ENCODE measurements at regions of chr19 and their contacts with region 1.

Region 1: DNA sequence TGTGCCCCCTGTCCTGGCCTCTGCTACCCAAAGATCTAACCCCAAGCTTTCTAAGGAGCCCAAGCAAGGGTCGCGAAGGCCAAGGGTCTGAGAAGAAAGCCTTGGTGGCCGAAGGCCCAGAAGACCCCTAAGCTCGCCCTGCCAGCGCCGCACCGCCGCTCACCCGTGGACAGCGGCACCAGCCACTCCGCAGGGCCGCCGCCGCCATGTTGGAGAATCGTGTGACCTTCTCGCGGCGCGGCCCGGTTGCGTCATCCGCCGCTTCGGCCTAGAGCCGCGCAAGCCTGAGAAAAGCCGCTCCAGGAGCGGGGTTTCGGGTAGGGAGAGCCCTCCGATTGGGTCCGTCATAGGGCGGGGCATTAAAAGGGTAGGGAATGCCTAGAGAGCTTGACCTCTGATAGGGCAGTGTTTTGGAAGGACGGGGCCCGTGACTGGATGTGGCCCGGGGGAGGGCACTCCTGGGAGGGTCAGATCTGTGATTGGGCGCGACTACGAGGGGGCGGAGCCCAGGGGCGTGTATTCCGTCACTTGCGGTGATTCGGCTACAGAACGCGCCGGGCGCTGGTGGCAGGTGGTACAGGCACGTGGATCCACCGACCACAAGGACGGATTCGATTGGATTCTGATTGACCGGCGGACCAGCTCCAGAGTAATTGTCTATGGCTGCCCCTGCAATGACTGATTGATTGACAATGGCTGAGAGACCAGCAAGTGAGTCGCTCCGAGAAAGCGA is at the start of gene TIMM44:
- DNase-seq: peak; percentile 99
- H3K4me3 ChIP-seq: peak within 1 kb of the TSS; percentile 87
- H3K27ac ChIP-seq: peak within 1 kb of the TSS; percentile 91
- H3K4me1 ChIP-seq: peaks cover 17% of the 10 kb centered on the region
- H3K27me3 ChIP-seq: no peaks in the 10 kb centered on the region
- CTCF ChIP-seq: no peak
- total RNA-seq, gene TIMM44: 72.8 and 74.6 TPM in 2 replicates

Region 2: GRCh38 chr19:7629347-7630054 is 314.1 kb before region 1 on chr19 and contains the starts of genes PET100 and XAB2:
- CTCF ChIA-PET with region 1: interaction called, 12 read pairs
- POLR2A ChIA-PET with region 1: no interaction called
- intact Hi-C with region 1: no loop called
- DNase-seq: peak; percentile 95 to 98
- H3K4me3 ChIP-seq: peak within 1 kb of the TSS; percentile 92
- H3K27ac ChIP-seq: peak within 1 kb of the TSS; percentile 45
- H3K4me1 ChIP-seq: peaks cover 18% of the 10 kb centered on the region
- H3K27me3 ChIP-seq: no peaks in the 10 kb centered on the region
- CTCF ChIP-seq: no peak
- total RNA-seq, gene PET100: 149 and 222 TPM in 2 replicates
- total RNA-seq, gene XAB2: 44.9 and 51.3 TPM in 2 replicates

Region 3: DNA sequence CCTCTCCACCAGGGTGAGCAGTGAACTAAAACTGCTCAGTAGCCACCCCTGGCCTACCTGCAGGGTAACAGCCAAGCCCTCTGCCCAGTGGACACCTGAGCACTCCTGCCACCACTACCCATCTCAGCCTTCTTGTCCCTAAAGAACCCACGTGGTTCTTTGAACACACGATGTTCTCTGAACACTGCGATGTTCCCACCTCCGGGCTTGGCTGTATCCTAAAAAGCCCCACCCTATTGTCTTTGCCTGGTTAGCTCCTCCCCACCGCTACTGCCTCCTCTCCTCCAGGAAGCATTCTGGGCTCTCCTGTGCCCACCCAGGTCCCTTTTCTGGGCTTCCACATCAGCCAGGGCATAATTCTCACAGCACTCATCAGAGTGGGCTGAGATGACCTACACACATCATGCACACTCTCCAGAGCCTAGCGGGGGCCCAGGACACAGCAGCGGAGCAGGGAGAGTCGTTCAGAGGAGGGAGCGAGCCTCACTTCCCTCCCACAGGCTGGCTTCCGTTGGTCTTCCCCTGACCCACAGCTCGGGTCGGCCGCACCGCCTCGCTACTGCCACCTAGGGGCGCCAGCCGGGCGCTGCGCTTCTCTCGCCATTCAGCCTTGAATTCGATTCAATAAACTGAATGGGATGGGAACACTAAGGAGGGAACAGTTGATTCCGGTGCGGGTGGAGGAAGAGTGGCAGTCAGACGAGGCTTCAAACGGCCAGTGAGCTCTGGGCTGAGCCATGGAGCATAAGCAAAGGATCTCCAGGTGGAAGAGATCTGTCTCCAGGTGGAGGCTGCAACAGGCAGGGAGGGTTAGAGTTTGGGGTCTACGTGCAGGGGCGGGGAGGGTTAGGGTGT is 58.6 kb after region 1 on chr19:
- CTCF ChIA-PET with region 1: interaction called, 5 read pairs
- POLR2A ChIA-PET with region 1: no interaction called
- intact Hi-C with region 1: loop called (anchors 1 kb)
- DNase-seq: peak; percentile 76 to 84
- H3K4me3 ChIP-seq: peak overlapping the region; percentile 11; the same call in 1 of the 2 replicates
- H3K27ac ChIP-seq: 0 out of 2 replicates have a peak overlapping the region, but pooled peaks have one; percentile 2
- H3K4me1 ChIP-seq: peaks cover 30% of the 10 kb centered on the region
- H3K27me3 ChIP-seq: no peaks in the 10 kb centered on the region
- CTCF ChIP-seq: peak; percentile 99

Region 4: DNA sequence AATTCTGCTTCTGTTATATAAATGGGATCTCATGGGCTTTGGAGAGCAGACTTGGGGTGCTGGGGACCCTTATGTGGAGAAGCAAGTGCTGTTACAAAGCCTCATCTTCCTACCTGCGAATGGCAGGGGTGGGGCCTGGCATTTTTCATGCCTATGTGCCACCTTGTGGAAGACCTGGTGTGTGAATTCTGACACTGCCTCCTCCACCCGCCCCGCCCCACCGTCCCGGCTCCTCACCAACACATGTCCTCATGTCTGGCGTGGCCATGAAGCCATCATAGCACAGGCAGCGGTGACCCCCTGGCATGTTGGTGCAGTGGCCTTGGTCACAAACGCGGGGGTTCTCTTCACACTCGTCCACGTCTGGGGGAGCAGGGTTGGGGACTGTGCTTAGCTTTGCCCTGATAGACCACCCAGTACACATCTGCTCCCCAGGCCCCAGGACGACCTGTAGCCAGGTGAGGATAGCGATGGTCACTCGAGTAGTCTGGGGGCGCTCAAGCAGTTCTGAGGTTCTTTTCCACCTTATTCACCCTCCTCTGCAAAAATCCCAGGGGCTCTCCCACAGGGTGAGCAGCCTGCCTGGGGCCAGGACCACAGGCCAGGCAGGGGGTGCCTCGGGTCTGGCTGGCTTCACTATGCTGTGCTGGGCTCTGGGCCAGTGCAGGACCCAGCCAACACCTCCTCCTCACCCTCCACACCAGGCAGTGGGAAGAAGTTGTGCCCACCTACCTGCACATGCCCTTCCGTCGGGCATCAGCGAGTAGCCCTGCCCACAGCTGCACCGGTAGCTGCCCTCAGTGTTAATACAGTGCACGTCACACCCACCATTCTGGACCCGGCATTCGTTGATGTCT is 173.1 kb after region 1 on chr19:
- CTCF ChIA-PET with region 1: no interaction called
- POLR2A ChIA-PET with region 1: no interaction called
- intact Hi-C with region 1: loop called (anchors 5 kb)
- DNase-seq: peak in 1 of 2 experiments; percentile 30
- H3K4me3 ChIP-seq: no peak overlapping the region
- H3K27ac ChIP-seq: no peak overlapping the region
- H3K4me1 ChIP-seq: peaks cover 10% of the 10 kb centered on the region
- H3K27me3 ChIP-seq: peaks cover 14% of the 10 kb centered on the region
- CTCF ChIP-seq: peak; percentile 45

Region 5: GRCh38 chr19:8208922-8209461 is 265.4 kb after region 1 on chr19 and contains the start of gene CERS4:
- CTCF ChIA-PET with region 1: interaction called, 10 read pairs
- POLR2A ChIA-PET with region 1: no interaction called
- intact Hi-C with region 1: no loop called
- DNase-seq: peak; percentile 49 to 53
- H3K4me3 ChIP-seq: peak within 1 kb of the TSS; percentile 66; the same call in 1 of the 2 replicates
- H3K27ac ChIP-seq: peak within 1 kb of the TSS; percentile 51
- H3K4me1 ChIP-seq: peaks cover 44% of the 10 kb centered on the region
- H3K27me3 ChIP-seq: no peaks in the 10 kb centered on the region
- CTCF ChIP-seq: no peak
- total RNA-seq, gene CERS4: 7.2 and 8.4 TPM in 2 replicates

Region 6: DNA sequence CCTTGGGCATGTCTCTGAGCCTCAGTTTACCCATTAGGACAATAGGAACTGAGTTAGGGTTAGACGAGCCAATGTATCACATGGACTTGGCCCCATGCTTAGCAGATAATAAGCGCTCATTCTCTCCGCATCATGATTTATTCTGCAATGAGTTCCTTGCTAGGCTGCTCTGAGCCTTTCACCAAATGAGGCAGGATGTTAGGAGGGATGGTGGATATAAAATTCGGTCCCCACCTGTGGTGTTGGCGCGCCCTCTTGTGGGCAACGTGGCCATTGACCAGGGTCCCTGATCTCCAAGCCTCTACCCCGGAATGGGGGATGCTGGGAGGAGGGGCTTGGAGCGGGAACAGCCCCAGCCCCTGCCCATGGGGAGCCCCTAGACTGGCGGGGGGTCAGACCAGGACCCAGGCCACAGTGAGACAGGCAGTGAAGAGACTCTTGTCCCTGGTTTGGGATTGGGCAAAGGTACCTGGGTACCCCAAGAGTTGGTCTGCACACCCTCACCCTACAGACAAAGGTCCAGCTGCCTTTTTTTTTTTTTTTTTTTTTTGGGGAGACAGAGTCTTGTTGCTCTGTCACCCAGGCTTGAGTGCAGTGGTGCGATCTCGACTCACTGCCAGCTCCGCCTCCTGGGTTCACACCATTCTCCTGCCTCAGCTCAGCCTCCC is 309.4 kb after region 1 on chr19:
- CTCF ChIA-PET with region 1: interaction called, 5 read pairs
- POLR2A ChIA-PET with region 1: no interaction called
- intact Hi-C with region 1: loop called (anchors 1 kb)
- DNase-seq: peak; percentile 65 to 79
- H3K4me3 ChIP-seq: no peak overlapping the region
- H3K27ac ChIP-seq: no peak overlapping the region
- H3K4me1 ChIP-seq: no peaks in the 10 kb centered on the region
- H3K27me3 ChIP-seq: no peaks in the 10 kb centered on the region
- CTCF ChIP-seq: peak; percentile 99